GM10248 (cell line): ENCODE measurements at regions of chr15 and their contacts with region 1.

Region 1: GRCh38 chr15:73964736-73965093 is 27.4 kb downstream of the STOML1 start:
- DNase-seq: peak; percentile 86
- CTCF ChIP-seq: peak; percentile 95

Region 2: GRCh38 chr15:73950831-73951561 is 13.7 kb before region 1 on chr15:
- CTCF ChIA-PET with region 1: interaction called, 40 read pairs
- POLR2A ChIA-PET with region 1: no interaction called
- DNase-seq: peak; percentile 78
- CTCF ChIP-seq: peak; percentile 78